ENCODE measurements at regions of chr11 and their contacts with region 1.

Region 1: DNA sequence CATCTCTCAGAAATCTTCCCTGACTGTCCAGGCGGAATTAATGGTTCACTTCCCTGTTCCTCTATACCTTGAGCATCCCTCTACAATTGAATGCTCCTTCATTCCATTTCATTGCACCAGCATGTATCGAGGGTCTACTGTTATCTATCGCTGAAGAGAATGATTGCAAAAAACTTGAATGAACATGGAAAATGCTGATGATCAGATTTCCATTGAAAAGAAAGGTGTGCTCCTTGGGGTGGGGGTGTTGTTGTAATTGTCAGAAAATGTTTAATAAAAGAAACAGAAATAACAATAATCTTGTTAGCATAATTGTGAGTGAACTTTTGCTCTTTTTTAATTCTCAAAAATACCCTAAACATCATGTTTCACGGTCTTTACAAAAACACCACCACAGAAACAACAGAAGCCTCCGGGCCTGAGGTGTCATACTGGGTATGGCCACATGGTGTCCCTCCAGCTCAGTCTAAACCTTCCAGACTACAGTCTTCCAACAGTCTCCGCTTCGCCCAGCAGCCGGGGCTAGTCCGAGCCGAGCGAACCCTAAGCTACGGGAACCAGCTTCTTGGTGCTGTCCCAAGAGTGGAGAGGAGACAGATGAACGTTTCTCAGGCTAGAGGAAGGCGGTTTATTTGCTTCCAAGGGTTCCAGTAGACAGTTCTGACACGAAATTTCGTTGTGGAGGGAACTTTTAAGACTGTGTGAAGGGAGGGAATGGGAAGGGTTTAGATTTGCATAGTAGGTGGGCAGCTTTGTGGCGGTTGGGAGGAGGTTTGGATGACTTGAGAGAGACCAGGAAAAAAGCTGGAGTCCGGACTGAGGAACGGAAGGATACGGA is 75.8 kb upstream of the ZBED5 start:
- DNase-seq: peak; percentile 85
- ATAC-seq: peak; percentile 79
- H3K4me3 Mint-ChIP-seq: peak overlapping the region; percentile 70
- H3K27ac Mint-ChIP-seq: no peak overlapping the region
- H3K4me1 Mint-ChIP-seq: peaks cover 18% of the 10 kb centered on the region
- H3K27me3 Mint-ChIP-seq: peaks cover 43% of the 10 kb centered on the region

Region 2: GRCh38 chr11:10943968-10944367 is 10.3 kb after region 1 on chr11:
- CTCF ChIA-PET with region 1: interaction called, 34 read pairs
- POLR2A ChIA-PET with region 1: no interaction called
- DNase-seq: no peak
- ATAC-seq: no peak
- H3K4me3 Mint-ChIP-seq: no peak overlapping the region
- H3K27ac Mint-ChIP-seq: no peak overlapping the region
- H3K4me1 Mint-ChIP-seq: no peaks in the 10 kb centered on the region
- H3K27me3 Mint-ChIP-seq: peaks cover 12% of the 10 kb centered on the region

Region 3: GRCh38 chr11:11022125-11022730 is 88.6 kb after region 1 on chr11:
- CTCF ChIA-PET with region 1: interaction called, 44 read pairs
- POLR2A ChIA-PET with region 1: no interaction called
- DNase-seq: peak; percentile 43
- ATAC-seq: no peak
- H3K4me3 Mint-ChIP-seq: no peak overlapping the region
- H3K27ac Mint-ChIP-seq: no peak overlapping the region
- H3K4me1 Mint-ChIP-seq: no peaks in the 10 kb centered on the region
- H3K27me3 Mint-ChIP-seq: peaks cover 18% of the 10 kb centered on the region

Region 4: GRCh38 chr11:11057472-11057854 is 123.8 kb after region 1 on chr11:
- CTCF ChIA-PET with region 1: no interaction called
- POLR2A ChIA-PET with region 1: no interaction called
- DNase-seq: no peak
- ATAC-seq: no peak
- H3K4me3 Mint-ChIP-seq: no peak overlapping the region
- H3K27ac Mint-ChIP-seq: no peak overlapping the region
- H3K4me1 Mint-ChIP-seq: no peaks in the 10 kb centered on the region
- H3K27me3 Mint-ChIP-seq: no peaks in the 10 kb centered on the region